ENCODE measurements at regions of chr6 and their contacts with region 1.

Region 1: DNA sequence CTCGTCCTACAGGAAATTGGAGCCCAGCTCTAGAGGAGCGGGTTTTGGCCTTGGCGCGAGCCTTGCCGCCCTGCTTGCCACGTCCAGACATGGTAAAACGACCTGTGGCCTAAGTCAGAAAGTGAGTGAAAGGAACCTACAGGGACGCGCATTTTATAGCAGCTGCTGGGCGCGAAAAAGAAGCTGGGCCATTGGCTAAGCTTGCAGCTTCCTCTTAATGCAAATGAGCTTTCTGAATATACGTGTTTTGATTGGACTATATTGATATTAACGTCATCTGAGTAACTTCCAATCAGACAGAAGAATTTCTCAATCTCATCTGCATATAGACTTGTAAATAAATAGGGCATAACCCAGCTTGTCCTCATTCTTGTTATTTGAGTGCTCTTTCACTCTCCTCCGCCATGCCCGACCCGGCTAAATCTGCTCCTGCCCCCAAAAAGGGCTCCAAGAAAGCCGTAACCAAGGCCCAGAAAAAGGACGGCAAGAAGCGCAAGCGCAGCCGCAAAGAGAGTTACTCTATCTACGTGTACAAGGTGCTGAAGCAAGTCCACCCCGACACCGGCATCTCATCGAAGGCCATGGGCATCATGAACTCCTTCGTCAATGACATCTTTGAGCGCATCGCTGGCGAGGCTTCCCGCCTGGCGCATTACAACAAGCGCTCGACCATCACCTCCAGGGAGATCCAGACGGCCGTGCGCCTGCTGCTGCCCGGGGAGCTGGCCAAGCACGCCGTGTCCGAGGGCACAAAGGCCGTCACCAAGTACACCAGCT is 18.9 kb downstream of the OR2B2 start:
- DNase-seq: peak; percentile 98
- ATAC-seq: peak; percentile 68
- H3K4me3 ChIP-seq: peak overlapping the region; percentile 83
- H3K27ac ChIP-seq: peak overlapping the region; percentile 85
- H3K4me1 ChIP-seq: peaks cover 10% of the 10 kb centered on the region; the same call in 1 of the 2 replicates
- H3K27me3 ChIP-seq: no peaks in the 10 kb centered on the region
- CTCF ChIP-seq: no peak

Region 2: GRCh38 chr6:26045065-26045927 is 1848.0 kb before region 1 on chr6:
- CTCF ChIA-PET with region 1: no interaction called
- POLR2A ChIA-PET with region 1: no interaction called
- intact Hi-C with region 1: loop called (anchors 5 kb)
- DNase-seq: peak; percentile 98
- ATAC-seq: peak; percentile 57
- H3K4me3 ChIP-seq: peak overlapping the region; percentile 71
- H3K27ac ChIP-seq: peak overlapping the region; percentile 74
- H3K4me1 ChIP-seq: peaks cover 21% of the 10 kb centered on the region
- H3K27me3 ChIP-seq: no peaks in the 10 kb centered on the region
- CTCF ChIP-seq: peak; percentile 36; the same call in 1 of the 2 replicates

Region 3: DNA sequence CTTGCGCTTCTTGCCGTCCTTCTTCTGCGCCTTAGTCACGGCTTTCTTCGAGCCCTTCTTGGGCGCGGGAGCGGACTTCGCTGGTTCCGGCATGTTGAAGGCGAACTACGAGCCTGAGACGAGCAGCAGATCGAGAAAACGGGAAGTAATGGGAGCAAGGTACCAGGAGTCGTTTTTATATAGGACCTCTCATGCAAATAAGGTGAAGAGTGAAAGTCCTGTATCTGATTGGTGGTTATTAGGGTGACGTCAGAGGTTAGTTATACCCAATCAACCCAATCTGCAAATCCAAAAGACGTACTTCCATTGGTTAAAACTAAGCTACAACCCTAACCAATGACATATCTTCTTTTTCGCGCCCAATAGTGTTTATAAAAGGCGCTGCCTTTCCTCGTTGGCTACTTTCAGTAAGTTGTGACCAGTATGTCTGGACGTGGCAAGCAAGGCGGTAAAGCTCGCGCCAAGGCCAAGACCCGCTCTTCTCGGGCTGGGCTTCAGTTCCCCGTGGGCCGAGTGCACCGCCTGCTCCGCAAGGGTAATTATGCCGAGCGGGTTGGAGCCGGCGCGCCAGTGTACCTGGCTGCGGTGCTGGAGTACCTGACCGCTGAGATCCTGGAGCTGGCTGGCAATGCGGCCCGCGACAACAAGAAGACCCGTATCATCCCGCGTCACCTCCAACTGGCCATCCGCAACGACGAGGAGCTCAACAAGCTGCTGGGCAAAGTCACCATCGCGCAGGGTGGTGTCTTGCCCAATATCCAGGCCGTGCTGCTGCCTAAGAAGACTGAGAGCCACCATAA is 746.3 kb before region 1 on chr6:
- CTCF ChIA-PET with region 1: interaction called, 8 read pairs
- POLR2A ChIA-PET with region 1: interaction called, 5 read pairs
- intact Hi-C with region 1: loop called (anchors 5 kb)
- DNase-seq: peak; percentile 98
- ATAC-seq: peak; percentile 70
- H3K4me3 ChIP-seq: peak overlapping the region; percentile 82
- H3K27ac ChIP-seq: peak overlapping the region; percentile 86
- H3K4me1 ChIP-seq: peaks cover 22% of the 10 kb centered on the region; the same call in 1 of the 2 replicates
- H3K27me3 ChIP-seq: no peaks in the 10 kb centered on the region
- CTCF ChIP-seq: no peak

Region 4: GRCh38 chr6:27753668-27754407 is 139.4 kb before region 1 on chr6:
- CTCF ChIA-PET with region 1: no interaction called
- POLR2A ChIA-PET with region 1: no interaction called
- intact Hi-C with region 1: no loop called
- DNase-seq: peak; percentile 92
- ATAC-seq: peak; percentile 70
- H3K4me3 ChIP-seq: peak overlapping the region; percentile 82
- H3K27ac ChIP-seq: no peak overlapping the region
- H3K4me1 ChIP-seq: peaks cover 15% of the 10 kb centered on the region
- H3K27me3 ChIP-seq: no peaks in the 10 kb centered on the region
- CTCF ChIP-seq: 0 out of 2 replicates have a peak, but pooled peaks have one; percentile 11

Region 5: GRCh38 chr6:27825025-27825793 is 68.0 kb before region 1 on chr6:
- CTCF ChIA-PET with region 1: interaction called, 8 read pairs
- POLR2A ChIA-PET with region 1: interaction called, 13 read pairs
- intact Hi-C with region 1: no loop called
- DNase-seq: peak; percentile 36
- ATAC-seq: no peak
- H3K4me3 ChIP-seq: peak overlapping the region; percentile 97
- H3K27ac ChIP-seq: peak overlapping the region; percentile 81
- H3K4me1 ChIP-seq: peaks cover 9% of the 10 kb centered on the region
- H3K27me3 ChIP-seq: no peaks in the 10 kb centered on the region
- CTCF ChIP-seq: no peak

Region 6: DNA sequence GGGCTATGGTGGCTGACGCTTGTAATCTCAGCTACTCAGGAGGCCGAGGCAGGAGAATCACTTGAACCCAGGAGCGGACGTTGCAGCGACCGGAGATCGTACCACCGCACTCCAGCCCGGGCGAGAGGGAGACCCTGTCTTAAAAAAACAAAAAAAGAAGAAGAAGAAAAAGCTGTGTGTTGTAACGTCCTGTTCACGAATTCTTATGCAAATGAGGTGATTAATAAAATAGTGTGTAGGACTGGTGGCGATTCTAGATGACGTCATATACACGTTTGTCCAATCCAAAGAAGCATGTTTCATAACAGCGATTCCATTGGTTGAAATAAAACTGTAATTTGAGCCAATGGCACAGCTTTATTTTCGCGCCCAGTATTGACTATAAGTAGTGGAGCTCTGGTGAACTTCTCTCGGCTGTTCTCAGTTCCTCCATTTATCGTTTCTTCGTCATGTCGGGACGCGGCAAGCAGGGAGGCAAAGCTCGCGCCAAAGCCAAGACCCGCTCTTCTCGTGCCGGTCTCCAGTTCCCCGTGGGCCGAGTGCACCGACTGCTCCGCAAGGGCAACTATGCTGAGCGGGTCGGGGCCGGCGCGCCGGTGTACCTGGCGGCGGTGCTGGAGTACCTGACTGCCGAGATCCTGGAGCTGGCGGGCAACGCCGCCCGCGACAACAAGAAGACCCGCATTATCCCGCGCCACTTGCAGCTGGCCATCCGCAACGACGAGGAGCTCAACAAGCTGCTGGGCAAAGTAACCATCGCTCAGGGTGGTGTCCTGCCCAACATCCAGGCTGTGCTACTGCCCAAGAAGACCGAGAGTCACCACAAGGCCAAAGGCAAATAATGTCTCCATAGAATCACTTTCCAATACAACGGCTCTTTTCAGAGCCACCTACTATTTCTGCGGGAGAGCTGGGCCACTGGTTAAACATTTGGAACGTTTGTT is 28.1 kb before region 1 on chr6:
- CTCF ChIA-PET with region 1: interaction called, 17 read pairs
- POLR2A ChIA-PET with region 1: interaction called, 36 read pairs
- intact Hi-C with region 1: loop called (anchors 1 kb)
- DNase-seq: peak; percentile 98
- ATAC-seq: peak; percentile 85
- H3K4me3 ChIP-seq: peak overlapping the region; percentile 74
- H3K27ac ChIP-seq: peak overlapping the region; percentile 35
- H3K4me1 ChIP-seq: peaks cover 21% of the 10 kb centered on the region
- H3K27me3 ChIP-seq: no peaks in the 10 kb centered on the region
- CTCF ChIP-seq: no peak

Region 7: DNA sequence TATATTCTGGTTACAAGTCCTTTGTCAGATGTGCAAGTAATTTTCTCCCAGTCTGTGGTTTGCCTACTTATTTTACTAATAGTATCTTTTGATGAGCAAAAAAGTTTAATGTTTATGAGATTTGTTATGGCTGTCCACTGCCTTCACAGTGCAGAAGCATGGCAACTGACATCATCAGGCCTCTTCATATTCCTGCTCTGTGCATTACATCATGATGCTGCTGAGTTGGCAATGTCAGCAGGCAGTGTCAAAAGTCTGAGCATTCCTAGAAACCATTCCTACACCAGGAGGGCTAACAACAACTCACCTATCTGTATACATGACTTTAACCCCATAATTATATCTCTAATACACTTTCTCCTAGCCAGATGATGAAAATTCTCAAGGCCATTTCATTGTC is 29.7 kb after region 1 on chr6:
- CTCF ChIA-PET with region 1: no interaction called
- POLR2A ChIA-PET with region 1: no interaction called
- intact Hi-C with region 1: no loop called
- DNase-seq: no peak
- ATAC-seq: no peak
- H3K4me3 ChIP-seq: no peak overlapping the region
- H3K27ac ChIP-seq: no peak overlapping the region
- H3K4me1 ChIP-seq: no peaks in the 10 kb centered on the region
- H3K27me3 ChIP-seq: no peaks in the 10 kb centered on the region
- CTCF ChIP-seq: no peak

Region 8: DNA sequence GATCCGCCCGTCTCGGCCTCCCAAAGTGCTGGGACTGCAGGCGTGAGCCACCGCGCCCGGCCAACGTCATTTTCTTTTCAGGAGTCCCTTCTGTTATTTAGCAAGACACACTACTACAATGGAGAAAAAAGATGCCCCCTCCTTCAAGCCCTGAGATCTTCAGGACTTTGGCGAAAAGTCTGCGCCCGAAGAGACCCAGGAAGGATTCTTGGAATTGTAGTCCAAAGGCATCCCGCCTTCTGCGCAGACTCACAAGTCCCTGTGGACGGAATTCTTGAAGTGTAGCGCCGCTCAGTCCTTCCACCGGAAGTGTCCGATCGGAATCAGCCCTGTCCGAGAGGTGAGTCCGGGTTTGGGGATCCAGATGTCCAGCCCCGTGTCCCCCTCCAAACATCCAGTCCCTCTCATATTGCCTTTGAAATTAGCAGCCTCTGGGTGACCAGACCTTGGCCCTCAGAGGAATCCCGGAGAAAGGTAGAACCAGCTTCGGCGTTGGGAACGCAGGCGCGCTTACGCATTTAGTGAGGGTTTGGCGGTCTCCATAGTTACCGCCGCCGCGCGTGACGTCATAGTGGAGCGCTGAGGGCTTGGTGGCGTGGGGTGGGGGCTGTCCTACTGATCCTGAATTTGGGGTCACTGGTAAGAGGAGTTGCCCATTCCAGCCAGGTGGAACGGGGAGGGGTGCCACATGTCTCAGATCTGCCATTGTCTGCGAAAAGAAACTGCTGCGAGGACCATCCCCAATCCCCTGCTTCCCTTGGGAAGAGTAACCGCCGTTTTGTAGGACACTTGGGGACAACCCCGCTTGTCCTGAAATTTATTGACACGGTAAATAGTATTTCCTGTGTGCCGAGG is 187.6 kb after region 1 on chr6:
- CTCF ChIA-PET with region 1: no interaction called
- POLR2A ChIA-PET with region 1: no interaction called
- intact Hi-C with region 1: no loop called
- DNase-seq: peak; percentile 96
- ATAC-seq: peak; percentile 84
- H3K4me3 ChIP-seq: peak overlapping the region; percentile 89
- H3K27ac ChIP-seq: peak overlapping the region; percentile 85
- H3K4me1 ChIP-seq: peaks cover 3% of the 10 kb centered on the region; the same call in 1 of the 2 replicates
- H3K27me3 ChIP-seq: no peaks in the 10 kb centered on the region
- CTCF ChIP-seq: no peak

Region 9: DNA sequence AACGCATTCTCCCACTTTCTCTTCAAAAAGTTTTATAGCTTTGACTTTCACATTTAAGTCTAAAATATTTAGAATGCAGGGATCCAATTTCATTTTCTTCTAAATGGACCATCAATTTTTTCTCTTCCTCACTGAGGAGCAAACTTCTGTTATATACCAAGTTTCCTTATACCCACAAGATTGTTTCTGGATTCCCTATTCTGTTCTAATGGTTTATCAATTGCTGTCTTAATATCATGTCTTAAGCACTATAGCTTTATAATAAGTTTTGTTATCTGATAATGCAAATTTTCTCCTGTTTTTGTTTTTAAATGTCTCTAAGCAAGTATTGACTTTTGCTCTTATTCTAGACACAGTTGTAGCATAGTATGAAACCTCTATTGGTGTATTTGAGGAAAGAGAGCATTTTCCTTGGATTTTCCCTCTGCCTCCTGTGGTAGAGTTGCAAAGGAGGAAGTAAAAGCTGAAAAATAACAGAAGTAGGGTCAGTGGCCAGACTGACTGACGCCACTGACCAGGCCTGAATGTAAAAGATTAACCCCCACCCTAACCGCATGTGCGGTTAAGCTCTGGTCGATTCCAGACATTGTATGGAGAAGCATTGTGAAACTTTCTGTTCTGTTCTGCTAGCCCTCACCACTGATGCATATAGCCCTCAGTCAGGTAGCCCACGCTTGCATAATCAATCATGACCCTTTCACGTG is 672.7 kb after region 1 on chr6:
- CTCF ChIA-PET with region 1: no interaction called
- POLR2A ChIA-PET with region 1: no interaction called
- intact Hi-C with region 1: no loop called
- DNase-seq: no peak
- ATAC-seq: no peak
- H3K4me3 ChIP-seq: no peak overlapping the region
- H3K27ac ChIP-seq: no peak overlapping the region
- H3K4me1 ChIP-seq: no peaks in the 10 kb centered on the region
- H3K27me3 ChIP-seq: peaks cover 5% of the 10 kb centered on the region; the same call in 1 of the 2 replicates
- CTCF ChIP-seq: no peak